Panc1 (cell line): ENCODE measurements at regions of chr13 and their contacts with region 1.

Region 1: GRCh38 chr13:110546930-110547329 is 14.6 kb downstream of the RAB20 start:
- DNase-seq: no peak
- ATAC-seq: peak; percentile 88
- H3K4me3 ChIP-seq: peak overlapping the region in 1 of 2 experiments; percentile 12; a peak in 1 of 4 replicates
- H3K27ac ChIP-seq: 0 out of 2 replicates have a peak overlapping the region, but pooled peaks have one; percentile 54
- H3K4me1 ChIP-seq: peaks cover 37% of the 10 kb centered on the region
- H3K27me3 ChIP-seq: no peaks in the 10 kb centered on the region
- CTCF ChIP-seq: no peak

Region 2: DNA sequence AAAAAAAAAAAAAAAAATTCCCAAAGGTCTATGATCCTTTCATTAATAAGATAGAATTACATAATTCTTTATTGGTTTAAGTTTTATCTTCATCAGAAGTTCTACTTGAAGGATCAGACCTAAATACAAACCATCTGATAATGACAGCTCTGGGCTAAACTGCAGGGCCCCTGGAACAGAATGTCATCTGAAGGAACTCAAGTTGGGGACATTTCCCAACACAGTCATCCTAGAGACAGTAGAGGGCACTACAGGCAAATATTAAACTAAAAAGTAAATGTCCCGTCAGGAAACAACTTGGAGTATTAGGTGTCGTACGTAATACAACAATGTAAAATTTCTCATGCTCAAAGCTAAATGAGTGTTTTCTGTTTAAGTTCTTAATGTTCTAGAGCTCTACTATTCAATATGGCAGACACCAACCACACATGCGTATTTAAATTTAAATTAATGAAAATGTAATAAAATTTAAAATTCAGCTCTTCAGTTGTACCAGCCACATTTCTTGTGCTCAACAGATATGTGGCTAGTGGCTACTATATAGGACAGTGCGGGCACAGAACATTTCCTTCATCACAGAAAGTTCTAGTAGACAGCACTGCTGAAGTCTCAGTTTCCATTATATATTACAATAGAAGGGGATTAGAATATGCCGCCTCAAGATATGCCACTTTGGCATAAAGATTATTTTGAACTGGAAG is 46.6 kb after region 1 on chr13:
- CTCF ChIA-PET with region 1: no interaction called
- POLR2A ChIA-PET with region 1: interaction called, 12 read pairs
- in situ Hi-C with region 1: no loop called
- intact Hi-C with region 1: no loop called
- DNase-seq: no peak
- ATAC-seq: peak; percentile 89
- H3K4me3 ChIP-seq: no peak overlapping the region
- H3K27ac ChIP-seq: no peak overlapping the region
- H3K4me1 ChIP-seq: no peaks in the 10 kb centered on the region
- H3K27me3 ChIP-seq: no peaks in the 10 kb centered on the region
- CTCF ChIP-seq: peak; percentile 49; the same call in 1 of the 2 replicates

Region 3: DNA sequence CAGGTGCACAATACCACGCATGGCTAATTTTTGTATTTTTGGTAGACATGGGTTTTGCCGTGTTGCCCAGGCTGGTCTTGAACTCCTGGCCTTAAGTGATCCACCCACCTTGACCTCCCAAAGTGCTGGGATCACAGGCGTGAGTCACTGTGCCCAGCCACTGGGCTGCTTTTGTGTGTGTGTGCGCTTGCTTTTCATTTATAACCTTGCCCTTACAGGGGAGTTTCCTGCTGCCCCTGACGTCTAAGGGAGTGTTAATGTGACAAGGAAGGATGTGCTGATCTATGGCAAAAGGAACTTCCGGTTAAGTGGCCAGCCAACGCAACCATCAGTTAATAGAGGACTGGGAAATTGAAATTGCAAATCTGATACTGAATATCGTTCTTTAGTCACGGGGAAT is 224.3 kb after region 1 on chr13:
- CTCF ChIA-PET with region 1: no interaction called
- POLR2A ChIA-PET with region 1: no interaction called
- in situ Hi-C with region 1: no loop called
- intact Hi-C with region 1: no loop called
- DNase-seq: no peak
- ATAC-seq: no peak
- H3K4me3 ChIP-seq: no peak overlapping the region
- H3K27ac ChIP-seq: no peak overlapping the region
- H3K4me1 ChIP-seq: no peaks in the 10 kb centered on the region
- H3K27me3 ChIP-seq: no peaks in the 10 kb centered on the region
- CTCF ChIP-seq: no peak